Left lung (tissue), 14 donors: ENCODE measurements at regions of chr6 and their contacts with region 1.

Region 1: DNA sequence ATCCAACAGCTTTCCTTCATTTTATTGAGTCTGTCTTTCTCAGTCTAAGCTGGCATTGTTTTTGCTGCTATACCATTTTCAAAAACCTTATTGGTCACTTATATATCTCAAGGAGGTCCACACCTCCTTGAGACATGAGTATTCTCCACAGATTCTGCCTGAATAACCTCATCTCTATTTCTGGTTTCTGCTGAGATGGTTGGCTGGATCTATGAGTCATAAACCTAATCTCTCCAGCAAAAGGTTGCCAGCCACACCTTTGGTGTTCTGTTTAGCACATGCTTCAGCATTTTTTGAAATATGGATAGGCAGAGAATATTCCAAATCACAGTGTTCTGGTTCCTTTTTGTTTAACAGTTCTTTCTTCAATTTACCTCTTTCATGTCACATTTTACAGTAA is 40.8 kb upstream of the TMEM244 start:
- DNase-seq: no peak
- ATAC-seq: no peak
- H3K4me3 ChIP-seq: no peak overlapping the region
- H3K27ac ChIP-seq: no peak overlapping the region
- H3K4me1 ChIP-seq: no peaks in the 10 kb centered on the region
- H3K27me3 ChIP-seq: no peaks in the 10 kb centered on the region
- CTCF ChIP-seq: no peak

Region 2: GRCh38 chr6:130020907-130021629 is 119.2 kb after region 1 on chr6:
- intact Hi-C with region 1: loop called in 1 of 2 experiments (anchors 10 kb)
- DNase-seq: peak; percentile 37 to 93 (median 84)
- ATAC-seq: peak; percentile 91
- H3K4me3 ChIP-seq: peak overlapping the region; percentile 73 to 86
- H3K27ac ChIP-seq: peak overlapping the region; percentile 84 to 86
- H3K4me1 ChIP-seq: peaks cover 0 to 13% of the 10 kb centered on the region in 2 donors
- H3K27me3 ChIP-seq: no peaks in the 10 kb centered on the region
- CTCF ChIP-seq: peak; percentile 68 to 74